Right ventricle myocardium superior (tissue), 1 donor: ENCODE measurements at regions of chr14 and their contacts with region 1.

Region 1: GRCh38 chr14:52824507-52824906 is 33.1 kb upstream of the GNPNAT1 start:
- DNase-seq: no peak
- ATAC-seq: no peak

Region 2: GRCh38 chr14:52961060-52961639 is 136.6 kb after region 1 on chr14:
- intact Hi-C with region 1: loop called (anchors 2 kb)
- DNase-seq: no peak
- ATAC-seq: peak; percentile 97

Region 3: DNA sequence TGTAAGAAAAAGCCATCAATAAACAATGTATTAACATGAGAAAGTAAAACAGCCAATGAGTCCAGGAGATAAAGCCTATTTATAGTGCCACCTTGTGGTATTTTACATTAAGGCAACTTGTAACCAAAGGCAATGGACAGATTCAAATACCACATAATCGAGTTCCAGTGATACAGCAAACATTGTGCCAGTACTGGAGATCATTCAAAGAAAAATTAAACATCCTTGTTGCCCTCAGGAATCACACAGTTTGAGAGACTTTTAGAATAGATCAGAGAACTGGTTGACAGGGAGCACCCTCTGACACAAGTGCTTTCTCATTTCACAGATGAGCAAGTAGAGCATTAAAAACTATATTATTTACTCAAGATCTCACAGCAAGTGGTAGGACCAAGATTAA is 230.5 kb after region 1 on chr14:
- intact Hi-C with region 1: loop called (anchors 5 kb)
- DNase-seq: no peak
- ATAC-seq: peak; percentile 84